A673 (cell line): ENCODE measurements at regions of chr17 and their contacts with region 1.

Region 1: DNA sequence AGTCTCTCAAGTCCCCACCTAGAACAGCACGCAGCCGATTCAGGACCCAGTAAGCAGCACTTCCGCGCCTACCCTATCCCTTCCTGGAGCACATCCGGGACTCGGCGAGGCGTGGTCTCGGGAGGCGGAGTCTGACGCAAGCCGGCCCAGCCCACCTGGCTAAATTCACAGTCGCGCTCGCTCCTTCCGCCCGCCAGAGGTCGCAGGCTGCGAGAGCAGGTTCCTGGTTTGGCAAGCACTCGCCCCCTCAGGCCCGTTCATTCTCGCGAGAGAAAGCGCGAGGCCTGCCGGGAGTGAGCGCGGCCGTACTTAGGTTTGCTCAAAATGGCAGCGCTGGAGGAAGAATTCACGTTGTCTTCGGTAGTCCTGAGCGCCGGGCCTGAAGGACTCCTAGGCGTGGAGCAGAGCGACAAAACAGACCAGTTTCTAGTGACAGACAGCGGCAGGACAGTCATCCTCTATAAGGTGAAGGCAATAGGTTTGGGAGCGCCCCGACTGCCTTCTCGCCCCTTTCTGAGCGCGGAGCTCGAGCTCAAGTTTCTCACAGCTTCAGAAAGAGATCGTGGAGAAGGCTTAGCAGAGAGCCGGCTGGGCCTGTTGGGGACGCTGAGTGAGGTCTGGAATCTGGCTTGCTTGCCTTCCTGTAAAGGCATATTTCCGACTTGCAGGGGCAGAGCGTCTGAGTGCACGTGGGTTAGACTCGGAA is at the start of gene NOL11:
- DNase-seq: peak; percentile 99
- H3K4me3 ChIP-seq: peak within 1 kb of the TSS; percentile 83
- H3K27ac ChIP-seq: peak within 1 kb of the TSS; percentile 96
- H3K4me1 ChIP-seq: peaks cover 18% of the 10 kb centered on the region
- H3K27me3 ChIP-seq: no peaks in the 10 kb centered on the region
- CTCF ChIP-seq: peak; percentile 98
- total RNA-seq, gene NOL11: 99.7 and 105 TPM in 2 replicates

Region 2: DNA sequence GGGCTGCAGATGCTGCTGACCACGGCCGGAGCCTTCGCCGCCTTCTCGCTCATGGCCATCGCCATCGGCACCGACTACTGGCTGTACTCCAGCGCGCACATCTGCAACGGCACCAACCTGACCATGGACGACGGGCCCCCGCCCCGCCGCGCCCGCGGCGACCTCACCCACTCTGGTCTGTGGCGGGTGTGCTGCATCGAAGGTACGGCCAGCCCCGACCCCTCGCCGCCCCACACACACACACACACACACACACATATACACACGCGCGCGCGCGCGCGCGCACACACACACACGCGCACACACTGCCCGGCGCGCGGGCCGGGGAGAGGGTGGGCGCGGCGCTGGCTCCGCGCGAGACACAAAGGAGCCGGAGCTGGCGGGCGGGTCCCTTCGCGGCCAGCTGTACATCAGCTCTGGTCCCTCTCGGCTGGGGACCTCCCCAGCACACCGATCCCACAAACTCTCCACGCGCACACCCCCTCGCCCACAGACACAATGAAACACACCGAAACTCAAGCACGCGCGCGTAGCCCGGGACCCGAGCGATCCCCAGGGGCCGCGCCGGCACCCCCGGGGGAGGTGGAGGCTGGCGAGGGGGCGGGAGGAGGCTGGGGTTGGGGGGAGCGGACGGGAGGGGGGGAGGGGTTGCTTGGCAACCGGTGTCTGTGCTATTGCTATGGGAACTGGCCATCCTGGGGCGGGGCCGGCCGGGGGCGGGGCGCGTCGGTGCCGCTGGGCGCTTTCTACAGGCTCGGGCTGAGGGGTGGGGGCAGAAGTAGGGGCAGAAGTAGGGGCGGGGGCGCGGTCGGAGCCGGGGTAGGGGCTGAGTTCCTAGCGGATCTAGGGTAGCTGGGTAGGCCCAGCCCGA is 752.6 kb before region 1 on chr17:
- CTCF ChIA-PET with region 1: no interaction called
- POLR2A ChIA-PET with region 1: no interaction called
- intact Hi-C with region 1: no loop called
- DNase-seq: peak; percentile 59
- H3K4me3 ChIP-seq: peak overlapping the region; percentile 60
- H3K27ac ChIP-seq: no peak overlapping the region
- H3K4me1 ChIP-seq: peaks cover 13% of the 10 kb centered on the region
- H3K27me3 ChIP-seq: peaks cover 27% of the 10 kb centered on the region
- CTCF ChIP-seq: no peak

Region 3: DNA sequence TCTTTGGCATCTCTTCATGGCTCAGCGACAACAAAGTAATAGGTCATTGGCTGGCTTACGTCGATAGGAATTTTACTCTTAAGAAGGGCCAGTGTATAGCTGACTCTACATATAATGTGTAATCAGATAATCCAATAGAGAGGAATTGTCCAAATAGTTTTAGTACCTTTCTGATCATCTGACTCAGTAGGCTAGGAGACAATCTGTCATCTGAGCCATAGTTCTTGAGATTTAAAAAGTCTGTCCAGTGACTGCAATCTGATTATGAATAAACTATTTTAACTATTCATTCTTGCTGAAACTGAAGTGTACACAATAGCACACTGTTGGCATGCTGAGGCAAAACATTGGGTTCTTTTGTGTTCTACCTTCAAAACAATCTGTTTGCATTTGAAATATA is 21.4 kb before region 1 on chr17:
- CTCF ChIA-PET with region 1: no interaction called
- POLR2A ChIA-PET with region 1: no interaction called
- intact Hi-C with region 1: no loop called
- DNase-seq: no peak
- H3K4me3 ChIP-seq: no peak overlapping the region
- H3K27ac ChIP-seq: no peak overlapping the region
- H3K4me1 ChIP-seq: peaks cover 5% of the 10 kb centered on the region
- H3K27me3 ChIP-seq: no peaks in the 10 kb centered on the region
- CTCF ChIP-seq: no peak

Region 4: GRCh38 chr17:67824735-67825626 is 107.2 kb after region 1 on chr17 and contains the start of gene BPTF:
- CTCF ChIA-PET with region 1: no interaction called
- POLR2A ChIA-PET with region 1: interaction called, 5 read pairs
- intact Hi-C with region 1: loop called (anchors 5 kb)
- DNase-seq: peak; percentile 96
- H3K4me3 ChIP-seq: peak within 1 kb of the TSS; percentile 80
- H3K27ac ChIP-seq: peak within 1 kb of the TSS; percentile 73
- H3K4me1 ChIP-seq: peaks cover 15% of the 10 kb centered on the region
- H3K27me3 ChIP-seq: no peaks in the 10 kb centered on the region
- CTCF ChIP-seq: peak; percentile 75
- total RNA-seq, gene BPTF: 108 and 109 TPM in 2 replicates

Region 5: GRCh38 chr17:67993596-67994361 is 276.0 kb after region 1 on chr17:
- CTCF ChIA-PET with region 1: no interaction called
- POLR2A ChIA-PET with region 1: interaction called, 11 read pairs
- intact Hi-C with region 1: no loop called
- DNase-seq: peak; percentile 91
- H3K4me3 ChIP-seq: peak overlapping the region; percentile 83
- H3K27ac ChIP-seq: peak overlapping the region; percentile 93
- H3K4me1 ChIP-seq: peaks cover 10% of the 10 kb centered on the region
- H3K27me3 ChIP-seq: no peaks in the 10 kb centered on the region
- CTCF ChIP-seq: no peak